ENCODE measurements at regions of chr11 and their contacts with region 1.

Region 1: GRCh38 chr11:82867495-82868082 is 32.6 kb downstream of the PRCP start:
- DNase-seq: peak; percentile 87
- H3K4me3 ChIP-seq: no peak overlapping the region
- H3K27ac ChIP-seq: no peak overlapping the region
- H3K4me1 ChIP-seq: peaks cover 15% of the 10 kb centered on the region
- H3K27me3 ChIP-seq: no peaks in the 10 kb centered on the region
- CTCF ChIP-seq: peak; percentile 43 to 44
- POLR2A ChIP-seq: no peak

Region 2: DNA sequence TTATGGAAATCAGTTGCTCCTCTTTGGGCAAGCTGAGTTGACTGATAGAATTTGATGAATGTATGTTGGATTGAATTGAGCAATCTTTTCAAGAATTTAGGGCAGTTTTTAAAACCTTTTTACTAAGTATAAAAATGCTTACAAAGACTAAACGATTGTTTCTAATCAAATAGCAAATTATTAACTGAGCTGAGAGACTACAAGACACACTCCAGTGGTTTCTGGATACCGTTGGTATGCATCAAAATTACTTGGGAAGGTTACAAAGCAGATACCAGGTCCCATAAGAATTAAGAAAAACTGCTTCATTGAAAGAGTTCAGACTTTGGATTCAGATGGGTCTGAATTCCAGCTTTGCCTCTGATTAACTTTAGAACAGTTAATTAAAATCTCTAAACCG is 855.3 kb before region 1 on chr11:
- CTCF ChIA-PET with region 1: no interaction called
- POLR2A ChIA-PET with region 1: no interaction called
- dilution Hi-C with region 1: no loop called
- intact Hi-C with region 1: no loop called
- DNase-seq: no peak
- H3K4me3 ChIP-seq: no peak overlapping the region
- H3K27ac ChIP-seq: no peak overlapping the region
- H3K4me1 ChIP-seq: no peaks in the 10 kb centered on the region
- H3K27me3 ChIP-seq: no peaks in the 10 kb centered on the region
- CTCF ChIP-seq: no peak
- POLR2A ChIP-seq: no peak

Region 3: GRCh38 chr11:82682003-82682751 is 185.4 kb before region 1 on chr11:
- CTCF ChIA-PET with region 1: interaction called, 3 read pairs
- POLR2A ChIA-PET with region 1: no interaction called
- dilution Hi-C with region 1: no loop called
- intact Hi-C with region 1: loop called (anchors 1 kb)
- DNase-seq: peak; percentile 61
- H3K4me3 ChIP-seq: no peak overlapping the region
- H3K27ac ChIP-seq: no peak overlapping the region
- H3K4me1 ChIP-seq: no peaks in the 10 kb centered on the region
- H3K27me3 ChIP-seq: peaks cover 2 to 8% of the 10 kb centered on the region in 2 experiments
- CTCF ChIP-seq: peak; percentile 35 to 43
- POLR2A ChIP-seq: no peak

Region 4: DNA sequence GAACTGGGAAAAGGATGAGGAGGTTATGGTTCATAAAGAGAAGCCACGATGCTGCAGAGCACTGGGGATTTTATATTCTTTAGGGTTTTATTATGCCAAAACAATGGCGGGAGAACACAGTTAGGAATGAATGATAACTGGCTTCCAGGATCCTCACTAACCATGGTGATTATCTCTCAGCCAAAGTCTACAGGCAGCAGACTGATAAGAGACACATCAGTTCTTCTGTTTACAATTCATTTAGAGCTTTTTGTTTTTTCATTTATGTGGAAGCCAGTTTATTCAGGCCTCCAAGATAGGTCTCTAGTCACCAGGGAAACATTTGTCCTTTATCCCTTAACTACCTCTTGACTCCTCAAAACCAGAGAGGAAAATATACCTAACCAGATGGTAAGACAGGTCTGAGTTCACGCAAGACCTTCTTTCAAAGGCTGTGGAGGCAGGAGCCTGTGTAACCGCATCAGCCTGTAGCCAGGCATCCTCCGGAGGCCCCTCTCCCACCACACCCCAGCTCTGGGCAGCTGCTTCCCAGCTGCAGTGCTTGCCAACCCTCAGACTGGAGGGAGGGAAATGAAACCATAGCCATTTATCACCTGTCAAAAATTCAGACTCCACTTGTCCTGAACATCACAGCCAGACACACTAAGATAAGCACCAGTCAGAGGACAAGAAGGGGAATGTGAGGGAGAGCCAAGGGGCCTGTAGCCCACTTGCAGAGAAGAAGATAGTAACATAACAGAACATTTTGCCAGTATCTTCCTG is 76.7 kb before region 1 on chr11:
- CTCF ChIA-PET with region 1: interaction called, 10 read pairs
- POLR2A ChIA-PET with region 1: no interaction called
- dilution Hi-C with region 1: no loop called
- intact Hi-C with region 1: no loop called
- DNase-seq: peak; percentile 45
- H3K4me3 ChIP-seq: no peak overlapping the region
- H3K27ac ChIP-seq: no peak overlapping the region
- H3K4me1 ChIP-seq: peaks cover 43% of the 10 kb centered on the region
- H3K27me3 ChIP-seq: no peaks in the 10 kb centered on the region
- CTCF ChIP-seq: no peak
- POLR2A ChIP-seq: no peak

Region 5: GRCh38 chr11:82889133-82890001 is 21.8 kb after region 1 on chr11:
- CTCF ChIA-PET with region 1: interaction called, 42 read pairs
- POLR2A ChIA-PET with region 1: no interaction called
- dilution Hi-C with region 1: no loop called
- intact Hi-C with region 1: no loop called
- DNase-seq: peak; percentile 96
- H3K4me3 ChIP-seq: no peak overlapping the region
- H3K27ac ChIP-seq: peak overlapping the region; percentile 63
- H3K4me1 ChIP-seq: peaks cover 51% of the 10 kb centered on the region
- H3K27me3 ChIP-seq: no peaks in the 10 kb centered on the region
- CTCF ChIP-seq: no peak
- POLR2A ChIP-seq: peak; percentile 73

Region 6: DNA sequence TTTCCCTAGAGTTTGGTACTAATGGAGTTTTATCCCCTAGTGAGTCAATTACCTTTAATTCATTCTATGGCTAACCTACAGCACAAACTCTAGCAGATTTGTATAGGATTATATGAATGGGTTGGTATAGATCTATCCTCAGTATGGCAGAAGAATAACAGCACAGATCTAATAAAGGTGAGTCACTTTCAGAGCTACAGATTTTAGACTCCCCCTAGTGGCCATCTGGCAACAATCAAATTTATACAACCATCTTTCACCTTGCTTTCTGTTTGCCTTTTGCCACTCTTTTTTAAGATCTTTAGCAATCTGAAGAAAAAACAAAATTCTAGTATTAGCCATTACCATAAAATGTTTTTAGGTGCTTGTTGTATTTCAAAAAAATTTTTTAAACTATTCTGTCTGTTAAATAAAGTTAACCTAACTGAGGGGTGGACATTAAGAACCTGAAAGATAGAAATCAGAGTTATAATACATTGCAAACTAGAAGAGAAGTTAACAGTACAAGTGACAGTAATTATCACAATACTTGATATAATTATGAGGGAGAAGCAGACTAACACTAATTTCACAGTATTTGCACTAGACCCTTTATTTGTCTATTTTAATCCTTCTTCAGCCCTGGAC is 59.8 kb after region 1 on chr11:
- CTCF ChIA-PET with region 1: interaction called, 24 read pairs
- POLR2A ChIA-PET with region 1: no interaction called
- dilution Hi-C with region 1: no loop called
- intact Hi-C with region 1: loop called (anchors 1 kb)
- DNase-seq: peak; percentile 59
- H3K4me3 ChIP-seq: no peak overlapping the region
- H3K27ac ChIP-seq: no peak overlapping the region
- H3K4me1 ChIP-seq: peaks cover 16% of the 10 kb centered on the region
- H3K27me3 ChIP-seq: no peaks in the 10 kb centered on the region
- CTCF ChIP-seq: peak; percentile 59 to 61
- POLR2A ChIP-seq: no peak

Region 7: DNA sequence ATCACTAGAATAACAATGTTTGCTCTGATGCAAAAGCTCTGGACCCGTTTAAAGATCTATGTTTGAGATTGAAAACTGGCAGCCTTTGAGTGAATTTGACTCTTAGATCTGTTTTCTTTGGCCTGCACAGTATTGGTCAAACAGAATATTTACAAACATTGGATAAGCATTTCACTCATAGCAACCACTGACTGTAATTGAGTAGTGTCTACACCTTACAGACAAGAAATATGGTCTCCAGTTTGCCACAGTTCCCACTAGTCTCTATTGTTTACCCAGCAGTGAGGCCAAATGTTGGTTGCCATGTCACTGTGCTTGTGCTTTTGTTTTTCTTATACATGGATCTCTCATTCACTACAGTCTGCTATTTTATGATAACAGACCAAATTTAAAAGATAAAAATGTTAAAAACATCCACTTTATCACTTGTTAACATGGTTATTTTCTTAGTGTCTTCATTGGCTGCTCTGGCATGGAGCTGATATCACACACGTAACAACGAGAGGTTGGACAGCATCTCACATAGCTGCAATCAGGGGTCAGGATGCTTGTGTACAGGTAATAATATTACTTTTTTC is 338.1 kb after region 1 on chr11:
- CTCF ChIA-PET with region 1: no interaction called
- POLR2A ChIA-PET with region 1: no interaction called
- dilution Hi-C with region 1: no loop called
- intact Hi-C with region 1: no loop called
- DNase-seq: no peak
- H3K4me3 ChIP-seq: no peak overlapping the region
- H3K27ac ChIP-seq: no peak overlapping the region
- H3K4me1 ChIP-seq: no peaks in the 10 kb centered on the region
- H3K27me3 ChIP-seq: no peaks in the 10 kb centered on the region
- CTCF ChIP-seq: no peak
- POLR2A ChIP-seq: no peak

Region 8: GRCh38 chr11:83249972-83250593 is 382.5 kb after region 1 on chr11:
- CTCF ChIA-PET with region 1: interaction called, 36 read pairs
- POLR2A ChIA-PET with region 1: no interaction called
- dilution Hi-C with region 1: no loop called
- intact Hi-C with region 1: loop called (anchors 1 kb)
- DNase-seq: peak; percentile 46
- H3K4me3 ChIP-seq: no peak overlapping the region
- H3K27ac ChIP-seq: no peak overlapping the region
- H3K4me1 ChIP-seq: no peaks in the 10 kb centered on the region
- H3K27me3 ChIP-seq: no peaks in the 10 kb centered on the region
- CTCF ChIP-seq: peak; percentile 35 to 53
- POLR2A ChIP-seq: no peak

Region 9: DNA sequence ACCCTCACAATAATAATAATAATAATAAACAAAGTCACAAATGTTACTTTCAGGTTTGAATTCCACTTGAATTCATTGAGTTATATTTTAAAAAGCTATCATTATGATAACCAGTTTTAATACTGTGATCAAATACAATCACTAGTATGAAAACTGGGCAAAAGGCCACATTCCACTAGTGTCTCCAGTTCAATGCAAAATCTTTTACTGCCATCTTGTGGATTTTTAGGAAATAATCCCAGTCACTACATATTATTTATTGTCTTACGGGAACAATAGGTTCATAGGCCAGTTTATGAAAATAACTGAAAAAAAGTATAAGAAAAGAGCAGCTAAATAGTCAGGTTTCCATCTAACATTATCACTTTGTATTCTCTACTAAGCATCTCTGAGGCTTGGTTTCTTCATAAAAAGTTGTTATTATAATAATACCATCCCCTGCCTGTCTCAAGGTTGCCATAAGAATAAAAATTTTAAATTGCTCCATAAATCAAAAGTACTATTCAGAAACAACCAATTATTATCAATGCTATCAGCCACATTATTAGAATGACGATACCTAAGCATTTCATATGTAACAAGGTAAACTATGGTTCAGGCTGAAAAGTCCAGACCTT is 952.5 kb after region 1 on chr11:
- CTCF ChIA-PET with region 1: interaction called, 17 read pairs
- POLR2A ChIA-PET with region 1: no interaction called
- dilution Hi-C with region 1: no loop called
- intact Hi-C with region 1: loop called (anchors 5 kb)
- DNase-seq: peak; percentile 65
- H3K4me3 ChIP-seq: no peak overlapping the region
- H3K27ac ChIP-seq: no peak overlapping the region
- H3K4me1 ChIP-seq: no peaks in the 10 kb centered on the region
- H3K27me3 ChIP-seq: peaks cover 0 to 2% of the 10 kb centered on the region in 2 experiments
- CTCF ChIP-seq: peak; percentile 18 to 23
- POLR2A ChIP-seq: no peak

Measured in endothelial cell of umbilical vein (primary cell).